ENCODE measurements at regions of chr2 and their contacts with region 1.

Region 1: DNA sequence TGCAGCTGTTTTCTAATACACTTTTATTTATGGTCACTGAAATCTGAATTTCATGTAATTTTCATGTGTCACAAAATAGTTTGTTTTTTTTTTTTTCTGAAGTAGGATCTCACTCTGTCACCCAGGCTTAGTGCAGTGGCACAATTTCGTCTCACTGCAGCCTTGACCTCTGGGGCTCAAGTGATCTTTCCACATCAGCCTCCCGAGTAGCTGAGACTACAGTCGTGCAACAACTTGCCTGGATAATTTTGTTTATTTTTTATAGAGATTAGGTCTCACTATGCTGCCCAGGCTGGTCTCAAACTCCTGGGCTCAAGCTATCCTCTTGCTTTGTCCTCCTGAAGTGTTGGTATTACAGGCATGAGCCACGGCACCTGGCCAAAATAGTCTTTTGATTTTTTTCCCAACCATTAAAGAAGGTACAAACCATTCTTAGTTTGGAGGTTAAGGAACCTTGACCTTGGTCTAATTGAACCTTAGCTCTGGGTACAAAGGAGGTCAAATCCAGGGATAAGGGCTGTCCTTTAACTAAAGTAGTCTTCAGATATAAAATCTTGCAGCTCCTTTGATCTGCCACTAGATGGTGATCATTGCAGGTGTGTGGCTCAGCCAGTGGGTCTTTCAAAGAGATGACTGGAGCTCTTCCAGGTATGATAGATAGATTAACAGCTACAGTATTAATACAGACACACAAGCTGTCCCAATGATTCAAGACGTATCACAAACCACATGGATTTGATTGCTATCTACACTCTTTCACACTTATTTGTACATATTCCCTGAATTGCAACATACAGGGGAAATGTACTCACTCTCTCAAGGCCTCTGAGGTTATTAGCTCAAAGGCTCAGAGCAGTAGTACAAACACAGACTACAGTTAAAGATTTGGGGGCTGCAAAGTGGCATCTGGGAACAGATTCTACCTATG is 4.7 kb upstream of the KRCC1 start:
- DNase-seq: no peak
- H3K4me3 ChIP-seq: no peak overlapping the region
- CTCF ChIP-seq: peak; percentile 54

Region 2: GRCh38 chr2:88038263-88039105 is 21.8 kb before region 1 on chr2:
- CTCF ChIA-PET with region 1: interaction called, 12 read pairs
- POLR2A ChIA-PET with region 1: interaction called, 4 read pairs
- DNase-seq: peak; percentile 92
- H3K4me3 ChIP-seq: no peak overlapping the region
- CTCF ChIP-seq: no peak

Region 3: GRCh38 chr2:88074854-88075292 is 14.6 kb after region 1 on chr2:
- CTCF ChIA-PET with region 1: interaction called, 45 read pairs
- POLR2A ChIA-PET with region 1: no interaction called
- DNase-seq: peak; percentile 87
- H3K4me3 ChIP-seq: no peak overlapping the region
- CTCF ChIP-seq: no peak

Region 4: GRCh38 chr2:88133875-88134274 is 73.6 kb after region 1 on chr2:
- CTCF ChIA-PET with region 1: interaction called, 13 read pairs
- POLR2A ChIA-PET with region 1: no interaction called
- DNase-seq: no peak
- H3K4me3 ChIP-seq: no peak overlapping the region
- CTCF ChIP-seq: no peak

Region 5: GRCh38 chr2:88159955-88160415 is 99.7 kb after region 1 on chr2:
- CTCF ChIA-PET with region 1: interaction called, 247 read pairs
- POLR2A ChIA-PET with region 1: no interaction called
- DNase-seq: no peak
- H3K4me3 ChIP-seq: no peak overlapping the region
- CTCF ChIP-seq: peak; percentile 78

Region 6: GRCh38 chr2:88181511-88181910 is 121.3 kb after region 1 on chr2:
- CTCF ChIA-PET with region 1: interaction called, 18 read pairs
- POLR2A ChIA-PET with region 1: no interaction called
- DNase-seq: peak; percentile 71
- H3K4me3 ChIP-seq: no peak overlapping the region
- CTCF ChIP-seq: no peak